PC-3 (cell line): ENCODE measurements at regions of chr19 and their contacts with region 1.

Region 1: DNA sequence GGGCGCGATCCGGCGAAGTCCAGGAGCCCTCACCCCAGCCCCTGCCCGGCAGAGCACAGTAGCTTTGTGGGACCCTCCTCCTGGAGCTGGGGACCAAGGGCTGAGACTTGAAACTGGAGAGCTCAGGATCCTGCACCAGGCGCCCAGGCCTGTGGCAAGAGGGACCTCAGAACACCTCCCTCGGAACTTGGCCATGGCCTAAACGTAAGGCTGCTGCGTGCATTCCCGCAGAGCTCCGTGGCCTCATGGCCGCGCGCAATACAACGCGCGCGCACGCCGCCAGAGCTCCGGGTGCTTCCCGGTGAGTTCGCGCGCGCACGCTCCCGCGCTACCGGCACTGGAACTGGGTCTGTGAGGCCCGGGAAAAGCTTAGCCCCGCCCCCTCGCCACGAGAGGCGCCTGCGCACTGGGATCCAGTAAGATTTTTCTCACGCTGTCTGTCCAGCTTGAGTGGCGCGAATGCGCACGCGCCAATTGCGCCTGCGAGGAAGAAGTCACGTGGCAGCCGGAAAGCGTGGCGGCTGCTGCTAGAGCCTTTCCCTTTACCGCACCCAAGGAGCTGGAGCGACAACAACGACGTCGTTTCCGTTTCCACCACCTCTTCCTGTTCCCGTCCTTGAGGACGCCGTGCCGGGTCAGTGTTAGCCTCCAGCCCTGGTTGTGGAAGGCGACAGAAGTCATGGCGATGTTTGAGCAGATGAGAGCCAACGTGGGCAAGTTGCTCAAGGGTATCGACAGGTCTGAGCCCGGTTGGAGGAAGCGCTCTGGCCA is at the start of gene EIF3K:
- DNase-seq: peak; percentile 98
- ATAC-seq: peak; percentile 92
- H3K4me3 ChIP-seq: peak within 1 kb of the TSS; percentile 92
- H3K27ac ChIP-seq: peak within 1 kb of the TSS; percentile 62
- H3K4me1 ChIP-seq: peaks cover 14% of the 10 kb centered on the region
- H3K27me3 ChIP-seq: no peaks in the 10 kb centered on the region
- CTCF ChIP-seq: no peak
- total RNA-seq, gene EIF3K: 310 and 414 TPM in 2 replicates

Region 2: DNA sequence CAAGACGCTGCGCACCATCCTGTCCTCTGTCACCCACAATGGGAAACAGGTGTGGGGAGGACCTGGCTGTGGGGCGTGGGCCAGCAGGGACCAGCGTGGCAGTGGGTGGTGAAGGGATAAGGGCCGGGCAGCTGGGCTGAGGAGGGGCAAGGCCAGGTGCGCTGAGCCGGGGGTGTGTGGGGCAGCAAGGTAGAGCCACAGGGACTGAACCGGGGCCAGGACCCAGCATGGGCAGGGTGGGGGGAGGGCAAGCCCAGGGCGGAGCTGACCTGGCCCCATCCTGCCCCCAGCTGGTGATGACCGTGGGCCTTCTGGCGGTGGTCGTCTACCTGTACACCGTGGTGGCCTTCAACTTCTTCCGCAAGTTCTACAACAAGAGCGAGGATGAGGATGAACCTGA is 38.7 kb before region 1 on chr19:
- CTCF ChIA-PET with region 1: no interaction called
- POLR2A ChIA-PET with region 1: no interaction called
- intact Hi-C with region 1: no loop called
- DNase-seq: no peak
- ATAC-seq: no peak
- H3K4me3 ChIP-seq: no peak overlapping the region
- H3K27ac ChIP-seq: no peak overlapping the region
- H3K4me1 ChIP-seq: no peaks in the 10 kb centered on the region
- H3K27me3 ChIP-seq: no peaks in the 10 kb centered on the region
- CTCF ChIP-seq: no peak

Region 3: DNA sequence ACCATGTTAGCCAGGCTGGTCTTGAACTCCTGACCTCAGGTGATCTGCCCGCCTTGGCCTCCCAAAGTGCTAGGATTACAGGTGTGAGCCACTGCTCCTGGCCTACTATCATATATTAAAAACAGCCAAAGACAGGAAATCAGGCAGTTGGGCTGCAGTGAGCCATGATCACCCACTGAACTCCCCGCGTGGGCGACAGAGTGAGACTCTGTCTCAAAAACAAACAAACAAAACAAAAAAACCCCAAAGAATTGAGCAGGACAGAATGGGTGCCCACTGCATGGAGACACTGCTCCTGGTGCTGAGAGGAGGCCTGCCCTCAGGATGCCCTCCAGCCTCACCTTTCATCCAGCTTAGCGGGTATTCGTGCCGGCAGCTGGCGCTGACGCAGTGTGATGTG is 264.5 kb after region 1 on chr19:
- CTCF ChIA-PET with region 1: no interaction called
- POLR2A ChIA-PET with region 1: interaction called, 12 read pairs
- intact Hi-C with region 1: no loop called
- DNase-seq: no peak
- ATAC-seq: no peak
- H3K4me3 ChIP-seq: no peak overlapping the region
- H3K27ac ChIP-seq: no peak overlapping the region
- H3K4me1 ChIP-seq: no peaks in the 10 kb centered on the region
- H3K27me3 ChIP-seq: no peaks in the 10 kb centered on the region
- CTCF ChIP-seq: no peak